Adrenal gland (tissue), 19 donors: ENCODE measurements at regions of chr2 and their contacts with region 1.

Region 1: DNA sequence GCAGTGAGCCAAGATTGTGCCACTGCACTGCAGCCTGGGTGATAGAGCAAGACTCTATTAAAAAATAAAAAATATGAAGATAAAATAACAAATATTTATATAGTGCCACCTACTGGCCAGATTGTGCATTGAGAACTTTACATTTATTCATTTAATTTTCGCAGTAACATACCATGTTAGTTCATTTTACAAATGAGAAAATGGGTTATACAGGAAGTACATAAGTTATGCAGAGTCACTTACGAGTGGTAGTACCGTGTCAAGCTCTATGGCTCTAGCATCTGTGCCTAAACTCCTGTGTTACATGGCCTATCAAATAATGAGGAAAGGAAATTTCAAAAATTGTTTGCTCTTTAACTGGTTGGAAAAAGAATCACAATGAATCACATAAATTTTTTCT is 27.9 kb downstream of the RIF1 start:
- DNase-seq: peak in 1 of 7 donors; percentile 16
- H3K4me3 ChIP-seq: no peak overlapping the region
- H3K27ac ChIP-seq: no peak overlapping the region
- H3K4me1 ChIP-seq: no peaks in the 10 kb centered on the region
- H3K27me3 ChIP-seq: no peaks in the 10 kb centered on the region
- CTCF ChIP-seq: peak; percentile 32 to 80 (median 57)
- POLR2A ChIP-seq: no peak

Region 2: DNA sequence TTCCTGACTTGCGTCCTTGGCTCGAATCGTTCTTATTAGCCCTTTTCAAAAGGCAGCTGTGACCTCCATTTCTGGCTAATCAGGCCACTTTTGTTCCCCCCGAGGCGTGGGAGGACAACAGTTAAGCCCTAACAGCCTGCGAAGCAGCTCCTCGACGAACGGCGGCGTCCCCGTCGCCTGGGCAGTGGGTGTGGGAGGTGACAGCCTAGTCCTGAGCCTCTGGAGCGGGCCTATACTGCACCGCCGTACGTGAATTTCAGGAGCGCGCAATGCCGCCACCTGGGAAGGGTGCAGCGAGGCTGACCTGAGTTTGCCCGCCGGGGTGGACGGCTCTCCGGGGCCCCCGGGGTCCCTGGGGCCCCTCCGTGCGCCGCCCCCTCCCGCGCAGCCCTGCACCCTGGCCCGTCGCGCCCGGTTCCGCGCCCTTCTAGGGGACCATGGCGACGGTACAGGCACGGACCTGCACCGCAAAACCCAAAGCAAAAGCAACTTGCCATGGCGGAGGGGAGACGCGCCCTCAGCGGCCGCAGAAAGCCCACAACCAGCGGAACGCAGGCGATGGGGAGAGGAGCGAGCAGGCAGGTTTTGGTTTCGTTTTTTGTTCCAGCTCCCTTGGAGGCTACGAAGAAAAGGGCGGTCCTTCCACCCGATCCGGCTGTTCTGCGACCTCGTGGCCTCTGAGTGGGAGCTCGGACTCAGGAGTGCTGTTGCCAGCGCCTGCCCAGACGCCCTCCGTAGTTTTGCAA is 176.2 kb before region 1 on chr2 and contains the start of gene RBM43:
- intact Hi-C with region 1: loop called in 1 of 2 experiments (anchors 10 kb)
- DNase-seq: peak; percentile 85 to 96 (median 95)
- H3K4me3 ChIP-seq: peak within 1 kb of the TSS; percentile 30 to 77 (median 72)
- H3K27ac ChIP-seq: peak within 1 kb of the TSS; percentile 85 to 99 (median 98)
- H3K4me1 ChIP-seq: peaks cover 7 to 27% of the 10 kb centered on the region in 2 donors
- H3K27me3 ChIP-seq: no peaks in the 10 kb centered on the region
- CTCF ChIP-seq: no peak
- POLR2A ChIP-seq: peak; percentile 37 to 84
- total RNA-seq, gene RBM43: 7.9 to 22.5 (median 12.4) TPM

Region 3: GRCh38 chr2:151269798-151270568 is 167.6 kb before region 1 on chr2:
- intact Hi-C with region 1: loop called (anchors 10 kb)
- DNase-seq: peak in 2 of 7 donors; percentile 43 to 57
- H3K4me3 ChIP-seq: no peak overlapping the region
- H3K27ac ChIP-seq: peak overlapping the region in 1 of 5 donors; percentile 25
- H3K4me1 ChIP-seq: peaks cover 0 to 4% of the 10 kb centered on the region in 2 donors
- H3K27me3 ChIP-seq: no peaks in the 10 kb centered on the region
- CTCF ChIP-seq: no peak
- POLR2A ChIP-seq: no peak